ENCODE measurements at regions of chr9 and their contacts with region 1.

Region 1: GRCh38 chr9:35553670-35554543 is 51.2 kb upstream of the TESK1 start:
- DNase-seq: peak in 3 of 4 donors; percentile 55 to 81 (median 74)
- ATAC-seq: peak; percentile 96
- H3K4me3 ChIP-seq: no peak overlapping the region
- H3K27ac ChIP-seq: peak overlapping the region in 1 of 2 donors; percentile 6
- H3K4me1 ChIP-seq: peaks cover 0 to 19% of the 10 kb centered on the region in 2 donors
- H3K27me3 ChIP-seq: no peaks in the 10 kb centered on the region
- CTCF ChIP-seq: peak; percentile 73 to 77

Region 2: GRCh38 chr9:35489313-35490154 is 64.4 kb before region 1 on chr9 and contains the start of gene RUSC2:
- intact Hi-C with region 1: loop called (anchors 5 to 10 kb)
- DNase-seq: peak; percentile 86 to 95 (median 90)
- ATAC-seq: peak; percentile 90
- H3K4me3 ChIP-seq: peak within 1 kb of the TSS; percentile 68 to 83
- H3K27ac ChIP-seq: peak within 1 kb of the TSS; percentile 90 to 94
- H3K4me1 ChIP-seq: peaks cover 8 to 26% of the 10 kb centered on the region in 2 donors
- H3K27me3 ChIP-seq: no peaks in the 10 kb centered on the region
- CTCF ChIP-seq: peak; percentile 25 to 65
- polyA plus RNA-seq, gene RUSC2: 14.9 to 19.9 (median 16.1) TPM

Region 3: GRCh38 chr9:35603987-35604577 is 50.2 kb after region 1 on chr9:
- intact Hi-C with region 1: no loop called
- DNase-seq: peak; percentile 99 to 100 (median 100)
- ATAC-seq: peak; percentile 93
- H3K4me3 ChIP-seq: peak overlapping the region; percentile 55 to 70
- H3K27ac ChIP-seq: peak overlapping the region; percentile 92 to 94
- H3K4me1 ChIP-seq: peaks cover 21 to 38% of the 10 kb centered on the region in 2 donors
- H3K27me3 ChIP-seq: no peaks in the 10 kb centered on the region
- CTCF ChIP-seq: peak; percentile 89 to 97

Region 4: GRCh38 chr9:35829084-35829763 is 275.3 kb after region 1 on chr9 and contains the start of gene TMEM8B:
- intact Hi-C with region 1: no loop called
- DNase-seq: peak; percentile 94 to 97 (median 96)
- ATAC-seq: peak; percentile 90
- H3K4me3 ChIP-seq: peak within 1 kb of the TSS; percentile 57 to 69
- H3K27ac ChIP-seq: peak within 1 kb of the TSS; percentile 82 to 90
- H3K4me1 ChIP-seq: peaks cover 6 to 31% of the 10 kb centered on the region in 2 donors
- H3K27me3 ChIP-seq: no peaks in the 10 kb centered on the region
- CTCF ChIP-seq: no peak
- polyA plus RNA-seq, gene TMEM8B: 25.3 to 30.7 (median 27.2) TPM